ENCODE measurements at regions of chr11 and their contacts with region 1.

Region 1: GRCh38 chr11:65329944-65330403 is 3.7 kb upstream of the DPF2 start:
- DNase-seq: peak; percentile 94
- H3K4me3 Mint-ChIP-seq: no peak overlapping the region
- H3K27ac Mint-ChIP-seq: no peak overlapping the region
- H3K4me1 Mint-ChIP-seq: peaks cover 14% of the 10 kb centered on the region
- H3K27me3 Mint-ChIP-seq: peaks cover 3% of the 10 kb centered on the region

Region 2: GRCh38 chr11:65261591-65262380 is 68.2 kb before region 1 on chr11 and contains the start of gene POLA2:
- intact Hi-C with region 1: loop called (anchors 5 kb)
- DNase-seq: peak; percentile 99
- H3K4me3 Mint-ChIP-seq: peak within 1 kb of the TSS; percentile 95
- H3K27ac Mint-ChIP-seq: peak within 1 kb of the TSS; percentile 99
- H3K4me1 Mint-ChIP-seq: peaks cover 48% of the 10 kb centered on the region
- H3K27me3 Mint-ChIP-seq: peaks cover 4% of the 10 kb centered on the region
- total RNA-seq, gene POLA2: 77.4 and 82.8 TPM in 2 replicates

Region 3: DNA sequence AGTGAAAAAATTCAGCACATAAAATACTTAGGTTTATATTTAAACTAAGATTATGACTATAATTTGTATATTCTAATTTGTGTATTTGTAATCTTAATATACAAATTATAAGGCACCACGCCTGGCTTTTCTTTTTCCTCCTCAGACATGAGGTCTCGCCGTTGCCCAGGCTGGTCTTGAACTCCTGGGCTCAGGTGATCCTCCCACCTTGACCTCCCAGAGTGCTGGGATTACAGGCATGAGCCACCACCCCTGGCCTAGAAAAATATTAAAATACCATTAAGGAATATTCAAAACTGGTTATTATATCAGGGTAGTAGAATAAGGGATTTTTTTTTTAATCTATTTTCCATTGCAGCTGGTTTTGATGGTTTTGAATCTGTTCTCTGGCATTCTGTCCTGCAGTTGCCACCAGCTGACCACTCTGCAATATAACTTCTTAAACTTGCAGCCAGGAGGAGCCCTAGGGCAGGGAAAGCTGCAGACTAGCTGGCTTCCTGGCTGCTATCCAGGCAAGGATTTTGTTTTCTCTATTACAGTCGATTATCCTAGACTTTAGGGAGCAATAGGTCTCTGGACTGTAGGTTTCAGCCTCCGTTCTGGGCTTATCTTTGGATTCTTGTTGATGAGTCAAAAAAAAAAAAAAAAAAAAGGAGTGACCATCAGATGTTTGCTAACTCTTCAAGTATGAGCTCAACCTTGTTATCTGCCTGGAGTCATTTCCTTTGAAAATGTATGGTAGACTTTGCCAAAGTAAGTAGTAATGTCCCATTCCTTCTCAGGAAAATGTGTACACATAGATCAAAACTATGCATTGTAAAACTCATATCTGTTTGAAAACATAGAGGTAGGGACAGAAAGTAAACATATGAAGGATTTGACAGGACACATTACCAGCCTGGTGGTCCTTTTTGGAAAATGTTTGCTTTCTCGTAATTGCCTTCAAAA is 55.0 kb before region 1 on chr11:
- intact Hi-C with region 1: loop called (anchors 1 kb)
- DNase-seq: peak; percentile 81
- H3K4me3 Mint-ChIP-seq: no peak overlapping the region
- H3K27ac Mint-ChIP-seq: no peak overlapping the region
- H3K4me1 Mint-ChIP-seq: peaks cover 12% of the 10 kb centered on the region
- H3K27me3 Mint-ChIP-seq: no peaks in the 10 kb centered on the region

Region 4: GRCh38 chr11:65314501-65315203 is 15.3 kb before region 1 on chr11 and contains the start of gene CDC42EP2:
- intact Hi-C with region 1: loop called (anchors 2 kb)
- DNase-seq: peak; percentile 93
- H3K4me3 Mint-ChIP-seq: peak within 1 kb of the TSS; percentile 83
- H3K27ac Mint-ChIP-seq: peak within 1 kb of the TSS; percentile 43
- H3K4me1 Mint-ChIP-seq: peaks cover 9% of the 10 kb centered on the region
- H3K27me3 Mint-ChIP-seq: peaks cover 7% of the 10 kb centered on the region
- total RNA-seq, gene CDC42EP2: 3.0 and 3.4 TPM in 2 replicates

Region 5: DNA sequence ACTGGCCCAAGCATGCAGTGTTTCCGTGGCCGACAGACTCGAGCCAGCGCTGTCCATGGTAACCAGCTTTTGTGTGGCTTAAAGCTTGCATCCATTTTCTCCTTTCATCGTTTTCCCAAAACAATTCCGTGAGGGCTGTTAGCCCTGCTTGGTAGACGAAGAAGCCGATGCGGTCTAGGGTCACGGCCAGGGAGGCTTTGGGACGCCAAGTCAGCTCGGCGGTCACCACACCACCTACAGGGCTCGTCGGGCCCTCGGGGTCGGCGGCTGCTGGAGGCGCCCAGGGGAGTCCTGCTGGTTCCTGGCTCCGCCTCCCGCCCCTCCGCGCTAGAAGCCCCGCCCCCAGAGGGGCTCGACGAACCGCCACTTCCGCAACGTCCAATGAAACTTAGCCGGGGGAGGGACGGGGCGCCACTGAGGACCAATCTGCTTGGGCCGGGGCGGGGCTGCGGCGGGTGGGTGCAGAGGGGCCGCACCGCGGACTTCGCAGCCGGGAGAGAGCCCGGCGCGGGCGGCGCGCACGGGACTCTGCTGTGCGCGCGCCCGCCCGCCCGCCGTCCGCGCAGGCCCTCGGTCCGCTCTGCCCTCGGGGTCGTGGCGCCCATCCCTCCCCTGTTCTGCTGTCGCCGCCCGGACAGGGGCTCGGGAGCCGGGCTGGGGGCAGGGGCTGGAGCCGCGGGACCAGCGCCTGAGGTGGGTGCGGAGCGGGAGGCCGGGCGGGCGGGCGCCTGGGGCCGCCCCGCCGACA is 24.5 kb after region 1 on chr11 and contains the start of gene TIGD3:
- intact Hi-C with region 1: loop called (anchors 1 kb)
- DNase-seq: peak; percentile 99
- H3K4me3 Mint-ChIP-seq: peak within 1 kb of the TSS; percentile 93
- H3K27ac Mint-ChIP-seq: peak within 1 kb of the TSS; percentile 85
- H3K4me1 Mint-ChIP-seq: peaks cover 11% of the 10 kb centered on the region
- H3K27me3 Mint-ChIP-seq: peaks cover 6% of the 10 kb centered on the region
- total RNA-seq, gene TIGD3: 1.2 and 1.6 TPM in 2 replicates

Measured in activated CD4-positive, alpha-beta T cell treated with anti-CD3 and anti-CD28 coated beads, Interleukin-2, amount 10 ng/mL, durations not matched to agents 24 days and 14 days (primary cell).